Calu3 (cell line): ENCODE measurements at regions of chr15 and their contacts with region 1.

Region 1: GRCh38 chr15:33029109-33029652 is 165.3 kb downstream of the FMN1 start:
- DNase-seq: no peak
- H3K4me3 Mint-ChIP-seq: no peak overlapping the region
- H3K27ac Mint-ChIP-seq: no peak overlapping the region
- H3K4me1 Mint-ChIP-seq: no peaks in the 10 kb centered on the region
- H3K27me3 Mint-ChIP-seq: no peaks in the 10 kb centered on the region
- CTCF ChIP-seq: no peak

Region 2: DNA sequence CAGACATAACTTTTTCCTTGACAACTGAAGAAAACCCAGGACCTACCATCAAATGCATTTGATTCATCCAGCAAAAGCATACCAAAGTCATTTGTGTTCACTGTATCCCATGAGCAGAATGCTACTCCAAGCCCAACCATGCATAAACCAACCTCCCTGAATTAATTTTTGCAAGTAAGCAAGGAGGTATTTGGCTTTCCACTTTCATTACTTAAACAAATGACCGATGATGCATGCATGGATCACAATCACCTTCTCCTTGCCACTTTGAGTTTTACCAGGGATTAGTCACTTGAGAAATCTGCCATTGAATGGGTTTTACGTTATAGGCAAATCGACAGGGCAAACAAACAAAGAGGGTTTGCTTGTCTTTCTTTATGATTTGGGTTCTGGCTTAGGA is 49.5 kb before region 1 on chr15:
- CTCF ChIA-PET with region 1: no interaction called
- intact Hi-C with region 1: no loop called
- DNase-seq: no peak
- H3K4me3 Mint-ChIP-seq: no peak overlapping the region
- H3K27ac Mint-ChIP-seq: no peak overlapping the region
- H3K4me1 Mint-ChIP-seq: no peaks in the 10 kb centered on the region
- H3K27me3 Mint-ChIP-seq: no peaks in the 10 kb centered on the region
- CTCF ChIP-seq: no peak

Region 3: DNA sequence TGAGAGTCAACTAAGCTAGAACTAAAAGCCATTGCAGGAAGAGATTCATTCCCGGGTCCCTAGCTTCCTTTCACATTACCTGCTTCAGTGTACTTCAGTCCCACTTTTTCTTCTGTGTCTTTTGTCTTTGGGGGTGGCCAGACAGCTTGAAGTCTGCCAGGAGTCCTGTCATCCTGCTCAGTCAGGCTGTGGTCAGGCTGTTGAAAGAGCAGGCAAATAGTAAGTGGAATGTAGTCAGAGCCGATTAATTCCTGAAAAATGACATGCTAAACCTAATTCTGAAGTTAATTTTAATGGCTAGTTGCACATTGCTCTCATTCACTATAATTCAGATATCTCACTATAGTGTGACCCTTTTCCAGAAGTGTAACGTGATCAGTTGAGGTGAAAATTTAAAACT is 35.7 kb after region 1 on chr15:
- CTCF ChIA-PET with region 1: no interaction called
- intact Hi-C with region 1: loop called (anchors 2 kb)
- DNase-seq: no peak
- H3K4me3 Mint-ChIP-seq: peak overlapping the region; percentile 61
- H3K27ac Mint-ChIP-seq: peak overlapping the region; percentile 36
- H3K4me1 Mint-ChIP-seq: peaks cover 27% of the 10 kb centered on the region
- H3K27me3 Mint-ChIP-seq: no peaks in the 10 kb centered on the region
- CTCF ChIP-seq: no peak